ENCODE measurements at regions of chr3 and their contacts with region 1.

Region 1: DNA sequence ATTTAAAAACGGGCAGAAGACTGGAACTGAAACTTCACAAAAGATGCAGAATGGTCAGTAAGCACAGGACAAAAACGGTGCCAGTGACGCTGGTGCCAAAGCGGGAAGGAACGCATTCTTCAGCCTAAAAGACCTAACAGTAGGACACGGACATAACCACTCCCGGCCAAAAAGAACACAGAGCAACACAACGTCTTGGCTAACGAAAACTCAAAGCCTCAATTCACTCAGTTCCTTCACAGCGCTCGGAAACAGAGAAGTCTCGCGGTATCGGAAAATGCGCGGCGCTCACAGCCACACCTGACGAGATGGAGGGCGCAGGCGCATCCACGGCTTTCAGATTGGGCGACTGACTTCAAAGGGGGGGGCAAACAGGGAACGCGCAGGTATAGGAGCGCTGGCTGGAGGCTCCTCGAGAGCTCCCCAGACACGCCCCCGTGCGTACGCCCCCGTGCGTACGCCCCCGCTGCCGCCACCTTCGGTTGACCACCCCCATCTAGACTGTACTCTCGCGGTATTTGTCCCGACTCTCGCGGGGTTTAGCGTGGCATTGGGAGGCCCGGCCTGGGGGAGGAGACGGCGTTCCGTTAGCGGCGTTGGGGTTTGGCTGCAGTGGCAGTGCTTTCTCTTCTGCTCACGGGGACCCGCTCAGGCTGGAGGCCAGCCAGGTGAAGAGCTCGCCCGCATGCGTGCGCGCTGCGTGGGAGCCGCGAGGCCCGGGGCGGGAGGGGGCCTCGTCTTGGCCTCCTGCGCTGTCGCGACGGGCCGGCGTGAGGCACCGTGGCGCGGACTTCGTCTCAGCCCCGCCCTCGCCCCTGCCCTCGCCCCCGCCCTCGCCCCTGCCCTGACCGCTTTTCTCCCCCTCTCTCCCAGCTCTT is at the start of gene NKTR:
- DNase-seq: peak; percentile 94
- CTCF ChIP-seq: no peak

Region 2: DNA sequence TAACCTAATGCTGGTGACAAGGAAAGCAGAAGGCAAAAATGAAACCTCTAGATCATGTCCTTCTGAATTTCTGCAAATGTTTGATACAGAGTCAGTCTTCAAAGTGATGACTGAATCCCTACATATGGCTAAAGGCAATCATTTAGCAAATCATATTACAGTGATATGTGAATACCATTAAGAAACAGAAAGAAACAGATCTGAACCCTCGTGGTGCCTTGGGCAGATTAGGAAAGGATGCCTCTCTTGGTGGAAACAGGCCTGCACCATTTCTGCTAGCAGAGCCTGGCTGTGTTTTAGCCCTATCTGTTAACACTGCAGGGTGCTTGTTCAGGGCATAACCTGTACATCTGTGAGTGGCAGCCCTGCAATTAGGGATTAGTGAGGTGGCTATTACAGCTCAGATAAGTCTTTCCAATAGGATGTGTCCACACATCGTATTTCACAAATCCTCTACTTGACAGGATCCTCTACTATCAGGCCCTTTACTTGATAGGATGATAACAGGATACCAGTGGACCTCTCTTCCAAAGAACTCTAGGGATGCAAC is 30.7 kb before region 1 on chr3:
- CTCF ChIA-PET with region 1: no interaction called
- POLR2A ChIA-PET with region 1: no interaction called
- DNase-seq: no peak
- CTCF ChIP-seq: no peak

Region 3: GRCh38 chr3:42613462-42613861 is 13.1 kb after region 1 on chr3:
- CTCF ChIA-PET with region 1: interaction called, 30 read pairs
- POLR2A ChIA-PET with region 1: interaction called, 4 read pairs
- DNase-seq: no peak
- CTCF ChIP-seq: peak; percentile 19